ENCODE measurements at regions of chr16 and their contacts with region 1.

Region 1: DNA sequence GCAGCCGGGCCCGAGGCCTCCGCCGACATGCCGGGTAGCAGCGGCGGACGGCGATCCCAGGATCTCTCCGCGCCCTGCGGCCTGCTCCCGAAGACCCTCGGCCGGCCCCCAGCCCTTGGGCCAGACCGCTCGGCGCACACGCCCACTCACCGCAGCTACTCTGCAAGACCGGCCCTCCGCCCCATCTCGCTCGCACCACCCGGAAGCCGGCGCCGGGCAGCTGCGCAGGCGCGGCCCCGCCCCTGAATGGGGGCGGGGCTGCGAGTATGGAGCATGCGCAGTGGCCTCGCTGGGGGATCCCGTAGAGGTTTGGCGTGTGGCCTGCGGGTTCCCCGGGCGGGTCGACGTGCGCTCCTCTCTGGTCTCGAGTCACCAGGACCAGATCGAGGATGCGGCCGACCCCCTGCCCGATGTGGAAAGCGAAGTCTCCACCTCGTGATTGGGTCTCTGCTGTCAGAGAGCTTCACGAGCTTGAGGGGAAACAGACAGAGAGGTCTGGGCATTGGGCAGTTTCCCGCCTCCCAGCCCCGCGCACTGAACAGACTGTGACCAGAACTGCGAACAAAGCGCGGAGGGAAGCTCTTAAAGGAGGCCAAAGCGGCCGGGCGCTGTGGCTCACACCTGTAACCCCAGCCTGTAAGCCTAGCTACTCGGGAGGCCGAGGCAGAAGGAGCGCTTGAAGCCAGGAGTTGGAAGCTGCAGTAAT is at the start of gene KCTD13:
- DNase-seq: peak; percentile 100

Region 2: DNA sequence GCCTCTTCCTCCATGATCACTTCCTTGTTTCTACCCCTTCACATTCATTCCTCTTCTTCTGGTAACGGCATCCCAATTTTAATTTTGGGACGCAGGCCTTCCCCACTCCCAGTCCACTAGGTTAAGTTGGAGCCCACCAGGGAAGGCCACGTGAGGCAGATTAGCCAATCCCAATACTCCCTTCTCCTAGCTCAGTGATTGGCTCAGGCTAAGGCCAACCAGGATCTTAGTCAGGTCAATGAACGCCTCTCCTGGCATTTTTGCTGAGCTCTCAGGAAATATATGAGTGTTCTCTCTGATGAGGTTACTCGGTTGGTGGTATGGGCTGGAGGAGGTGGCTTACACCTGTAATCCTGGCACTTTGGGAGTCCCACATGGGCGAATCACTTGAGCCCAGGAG is 42.2 kb before region 1 on chr16:
- CTCF ChIA-PET with region 1: no interaction called
- POLR2A ChIA-PET with region 1: no interaction called
- DNase-seq: peak; percentile 55

Region 3: GRCh38 chr16:29909391-29909790 is 16.8 kb before region 1 on chr16:
- CTCF ChIA-PET with region 1: interaction called, 3 read pairs
- POLR2A ChIA-PET with region 1: interaction called, 17 read pairs
- DNase-seq: peak; percentile 5

Region 4: GRCh38 chr16:29943846-29944669 is 17.9 kb after region 1 on chr16:
- CTCF ChIA-PET with region 1: interaction called, 9 read pairs
- POLR2A ChIA-PET with region 1: interaction called, 76 read pairs
- DNase-seq: peak; percentile 87

Region 5: DNA sequence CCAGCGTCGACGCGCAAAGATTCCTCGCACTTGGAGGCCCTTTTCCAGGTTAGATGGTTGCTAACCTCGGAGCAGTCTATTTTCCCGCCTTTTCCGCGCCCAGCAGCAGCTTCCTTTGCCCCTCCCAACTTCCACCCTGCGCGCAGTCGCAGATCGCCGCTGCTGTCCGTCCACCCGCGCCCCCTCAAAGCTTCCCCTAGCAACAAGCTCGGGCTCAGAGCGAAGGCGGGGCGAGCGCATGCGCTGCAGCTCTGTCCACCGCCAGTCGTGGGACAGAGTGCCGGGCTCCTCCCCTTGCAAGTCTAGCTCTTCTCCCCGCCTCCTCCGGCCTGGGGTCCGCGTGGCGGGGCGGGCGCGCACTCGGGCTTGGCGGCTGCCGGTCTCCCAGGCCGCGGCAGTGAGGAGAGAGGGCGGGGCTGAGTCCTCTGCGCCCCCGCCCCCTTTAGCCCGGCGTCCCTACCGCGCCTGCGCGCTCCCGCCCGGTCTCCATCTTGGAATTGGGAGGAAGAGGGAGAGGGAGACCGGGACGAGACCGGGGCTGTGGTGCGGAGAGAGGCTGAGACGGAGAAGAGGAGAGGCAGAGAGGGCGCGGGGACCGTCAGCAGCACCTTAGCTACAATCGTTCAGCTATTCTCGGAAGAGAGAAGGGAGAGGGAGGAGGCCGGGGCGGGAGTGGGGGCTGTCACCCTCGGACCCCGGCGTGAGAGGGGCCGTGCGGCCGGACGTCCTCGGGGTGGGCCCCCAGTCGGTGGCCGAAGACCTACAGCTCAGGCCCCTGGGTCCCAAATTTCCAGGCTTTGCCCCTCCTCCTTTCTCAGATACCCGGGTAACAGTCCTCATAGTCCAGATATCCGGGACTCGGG is 47.5 kb after region 1 on chr16 and contains the start of gene TAOK2:
- CTCF ChIA-PET with region 1: interaction called, 3 read pairs
- POLR2A ChIA-PET with region 1: interaction called, 60 read pairs
- DNase-seq: peak; percentile 100

Region 6: GRCh38 chr16:29995911-29996772 is 70.0 kb after region 1 on chr16 and contains the start of gene INO80E:
- CTCF ChIA-PET with region 1: no interaction called
- POLR2A ChIA-PET with region 1: interaction called, 34 read pairs
- DNase-seq: peak; percentile 100

Region 7: DNA sequence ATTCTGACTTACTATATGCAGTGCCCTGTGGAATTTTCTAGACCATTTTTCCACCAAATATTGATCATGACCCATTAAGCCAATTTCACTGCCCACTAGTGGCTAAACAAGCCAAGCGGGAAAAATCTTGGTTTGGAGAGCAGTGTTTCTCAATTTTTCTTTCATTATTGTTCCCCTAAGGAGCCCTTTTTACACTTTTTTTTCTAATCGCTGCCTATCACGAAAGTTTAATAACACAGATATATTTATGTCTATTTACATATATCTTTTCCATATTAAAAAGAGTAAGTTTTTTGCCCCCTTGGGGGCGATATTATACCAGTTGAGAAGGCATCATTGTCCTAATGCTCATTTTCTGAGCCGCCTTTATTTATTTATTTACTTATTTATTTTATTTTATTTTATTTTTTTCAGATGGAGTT is 115.7 kb after region 1 on chr16:
- CTCF ChIA-PET with region 1: no interaction called
- POLR2A ChIA-PET with region 1: no interaction called
- DNase-seq: no peak

Region 8: DNA sequence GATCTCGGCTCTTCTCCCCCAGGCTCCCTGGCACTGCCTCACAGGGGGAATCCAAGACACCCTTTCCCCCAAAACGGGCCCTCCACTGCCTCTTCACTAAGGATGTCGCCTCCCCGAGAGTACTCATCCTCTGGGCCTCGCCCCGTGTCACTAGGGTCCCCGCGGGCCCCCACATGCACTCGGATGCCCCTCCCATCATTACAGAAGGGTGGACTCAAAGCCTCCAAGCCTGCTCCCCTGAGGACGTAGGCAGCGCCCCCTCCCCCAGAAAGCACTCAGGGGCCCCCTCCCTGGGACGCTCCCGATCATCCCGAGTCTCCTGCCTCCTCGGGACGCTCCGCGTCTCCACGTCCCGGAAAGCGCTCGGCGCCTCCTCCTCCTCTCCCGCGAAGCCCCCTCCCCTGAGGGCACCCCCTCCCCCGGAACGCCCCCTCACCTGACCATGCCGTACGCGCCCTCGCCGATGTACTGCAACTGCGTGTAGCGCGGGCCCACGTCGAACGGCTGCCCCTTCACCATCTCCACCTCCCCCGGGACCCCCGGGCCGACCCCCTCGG is 196.5 kb after region 1 on chr16:
- CTCF ChIA-PET with region 1: no interaction called
- POLR2A ChIA-PET with region 1: no interaction called
- DNase-seq: no peak